ENCODE measurements at regions of chr2 and their contacts with region 1.

Region 1: DNA sequence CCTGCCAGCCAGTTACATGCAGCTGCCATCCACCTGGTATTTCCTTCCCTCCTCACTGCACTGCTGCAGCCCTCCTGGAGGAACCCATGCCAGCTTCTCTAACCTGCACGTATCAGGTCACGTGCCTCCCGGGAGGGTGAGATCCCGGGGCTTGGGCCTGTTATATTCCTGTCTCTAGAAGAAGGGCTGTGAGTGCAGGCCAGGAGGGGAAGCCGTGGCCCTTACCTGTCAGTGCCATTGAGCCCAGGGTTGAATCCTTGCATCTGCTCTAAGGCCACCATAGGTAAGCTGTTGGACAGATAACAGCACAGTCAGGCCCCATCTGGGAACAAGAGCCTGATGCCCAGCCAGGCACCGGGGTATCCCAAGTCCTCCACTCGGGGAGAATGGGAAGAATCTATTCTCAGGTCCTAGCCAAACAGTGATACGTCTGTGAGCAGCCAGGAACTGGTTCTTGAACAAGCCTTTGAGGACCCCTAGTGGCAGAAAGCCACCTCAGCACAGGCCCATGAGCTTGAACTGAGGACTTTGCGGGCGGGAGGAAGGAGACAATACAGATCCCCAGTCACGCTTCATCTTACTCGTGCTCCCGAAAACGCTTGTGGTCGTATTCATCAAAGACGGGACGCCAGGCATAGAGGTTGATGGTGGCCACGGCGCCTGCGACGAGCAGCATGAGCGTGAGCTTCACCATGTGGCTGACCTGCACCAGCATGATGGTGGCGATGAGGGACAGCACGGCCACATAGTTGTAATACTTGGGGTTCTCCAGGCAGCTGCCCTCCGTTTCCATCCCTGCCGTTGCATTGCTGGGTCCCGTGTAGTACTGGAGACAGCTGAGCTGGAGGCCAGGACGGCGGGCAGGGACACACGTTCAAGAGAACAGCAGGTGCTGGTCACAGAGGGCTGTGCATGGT is 34.4 kb downstream of the CENPO start:
- DNase-seq: peak; percentile 94
- H3K4me3 ChIP-seq: peak overlapping the region in 1 of 2 experiments; percentile 22; a peak in 1 of 4 replicates
- H3K27ac ChIP-seq: no peak overlapping the region
- H3K4me1 ChIP-seq: peaks cover 7 to 11% of the 10 kb centered on the region in 2 experiments; a peak in 1 of 4 replicates
- H3K27me3 ChIP-seq: no peaks in the 10 kb centered on the region
- CTCF ChIP-seq: peak; percentile 98
- EP300 ChIP-seq: no peak
- RAD21 ChIP-seq: peak; percentile 99

Region 2: GRCh38 chr2:24404491-24404921 is 423.1 kb before region 1 on chr2:
- CTCF ChIA-PET with region 1: interaction called, 269 read pairs
- POLR2A ChIA-PET with region 1: interaction called, 3 read pairs
- DNase-seq: no peak
- H3K4me3 ChIP-seq: no peak overlapping the region
- H3K27ac ChIP-seq: no peak overlapping the region
- H3K4me1 ChIP-seq: peaks cover 4 to 6% of the 10 kb centered on the region in 2 experiments; a peak in 2 of 4 replicates
- H3K27me3 ChIP-seq: no peaks in the 10 kb centered on the region
- CTCF ChIP-seq: no peak
- EP300 ChIP-seq: no peak
- RAD21 ChIP-seq: no peak

Region 3: GRCh38 chr2:24435391-24436316 is 391.9 kb before region 1 on chr2:
- CTCF ChIA-PET with region 1: interaction called, 21 read pairs
- POLR2A ChIA-PET with region 1: no interaction called
- DNase-seq: peak; percentile 61
- H3K4me3 ChIP-seq: no peak overlapping the region
- H3K27ac ChIP-seq: peak overlapping the region in 1 of 2 experiments; percentile 60; a peak in 2 of 4 replicates
- H3K4me1 ChIP-seq: peaks cover 6 to 13% of the 10 kb centered on the region in 2 experiments; a peak in 3 of 4 replicates
- H3K27me3 ChIP-seq: no peaks in the 10 kb centered on the region
- CTCF ChIP-seq: no peak
- EP300 ChIP-seq: no peak
- RAD21 ChIP-seq: no peak; the same call in 1 of the 2 replicates

Region 4: GRCh38 chr2:24816884-24817283 is 10.7 kb before region 1 on chr2:
- CTCF ChIA-PET with region 1: interaction called, 132 read pairs
- POLR2A ChIA-PET with region 1: no interaction called
- DNase-seq: peak; percentile 21
- H3K4me3 ChIP-seq: no peak overlapping the region
- H3K27ac ChIP-seq: peak overlapping the region in 1 of 2 experiments; percentile 71; a peak in 3 of 4 replicates
- H3K4me1 ChIP-seq: peaks cover 4 to 15% of the 10 kb centered on the region in 2 experiments; a peak in 2 of 4 replicates
- H3K27me3 ChIP-seq: no peaks in the 10 kb centered on the region
- CTCF ChIP-seq: no peak
- EP300 ChIP-seq: no peak; a peak in 1 of 4 replicates
- RAD21 ChIP-seq: no peak

Region 5: DNA sequence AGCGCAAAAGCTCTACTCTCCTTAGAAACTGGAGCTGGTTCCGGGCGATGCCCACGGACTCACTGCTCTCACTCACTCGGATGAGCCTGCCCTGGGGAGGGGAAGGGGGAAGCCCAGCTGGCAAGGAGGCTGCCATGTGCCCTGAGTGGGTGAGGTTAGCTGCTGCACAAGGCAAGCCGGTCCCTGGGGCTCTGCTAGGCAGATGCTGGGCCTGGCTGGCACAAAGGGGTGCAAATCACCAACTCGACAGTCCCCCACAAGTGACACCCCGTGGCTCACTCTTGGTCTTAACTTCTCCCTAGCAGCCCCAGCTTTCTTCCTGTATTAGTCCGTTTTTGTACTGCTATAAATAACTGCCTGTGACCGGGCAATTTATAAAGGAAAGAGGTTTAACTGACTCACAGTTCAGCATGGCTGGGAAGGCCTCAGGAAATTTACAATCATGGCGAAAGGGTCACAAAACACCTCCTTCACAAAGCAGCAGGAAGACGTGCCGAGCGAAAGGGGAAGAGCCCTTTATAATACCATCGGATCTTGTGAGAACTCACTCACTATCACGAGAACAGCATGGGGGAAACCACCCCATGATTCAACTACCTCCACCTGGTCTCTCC is 59.2 kb after region 1 on chr2:
- CTCF ChIA-PET with region 1: no interaction called
- POLR2A ChIA-PET with region 1: no interaction called
- DNase-seq: no peak
- H3K4me3 ChIP-seq: no peak overlapping the region
- H3K27ac ChIP-seq: no peak overlapping the region
- H3K4me1 ChIP-seq: no peaks in the 10 kb centered on the region; a peak in 1 of 4 replicates
- H3K27me3 ChIP-seq: no peaks in the 10 kb centered on the region
- CTCF ChIP-seq: no peak
- EP300 ChIP-seq: no peak
- RAD21 ChIP-seq: no peak

Region 6: GRCh38 chr2:24920098-24920808 is 92.7 kb after region 1 on chr2 and contains the start of gene ADCY3:
- CTCF ChIA-PET with region 1: interaction called, 11 read pairs
- POLR2A ChIA-PET with region 1: no interaction called
- DNase-seq: peak; percentile 90
- H3K4me3 ChIP-seq: peak within 1 kb of the TSS; percentile 66 to 73
- H3K27ac ChIP-seq: peak within 1 kb of the TSS in 1 of 2 experiments; percentile 1; a peak in 2 of 4 replicates
- H3K4me1 ChIP-seq: peaks cover 0 to 27% of the 10 kb centered on the region in 2 experiments; a peak in 1 of 4 replicates
- H3K27me3 ChIP-seq: no peaks in the 10 kb centered on the region
- CTCF ChIP-seq: no peak
- EP300 ChIP-seq: no peak
- RAD21 ChIP-seq: no peak
- polyA plus RNA-seq, gene ADCY3: 36.6 and 53.9 TPM in 2 replicates